MCF 10A (cell line): ENCODE measurements at regions of chr20 and their contacts with region 1.

Region 1: GRCh38 chr20:45771182-45771759 is 20.4 kb downstream of the WFDC3 start:
- DNase-seq: peak; percentile 83
- H3K4me3 Mint-ChIP-seq: no peak overlapping the region
- H3K27ac Mint-ChIP-seq: no peak overlapping the region
- H3K4me1 Mint-ChIP-seq: no peaks in the 10 kb centered on the region
- H3K27me3 Mint-ChIP-seq: peaks cover 11% of the 10 kb centered on the region
- CTCF ChIP-seq: peak; percentile 83

Region 2: GRCh38 chr20:45095753-45096371 is 675.4 kb before region 1 on chr20:
- CTCF ChIA-PET with region 1: interaction called, 13 read pairs
- POLR2A ChIA-PET with region 1: no interaction called
- intact Hi-C with region 1: no loop called
- DNase-seq: peak; percentile 76
- H3K4me3 Mint-ChIP-seq: no peak overlapping the region
- H3K27ac Mint-ChIP-seq: no peak overlapping the region
- H3K4me1 Mint-ChIP-seq: no peaks in the 10 kb centered on the region
- H3K27me3 Mint-ChIP-seq: no peaks in the 10 kb centered on the region
- CTCF ChIP-seq: peak; percentile 72

Region 3: DNA sequence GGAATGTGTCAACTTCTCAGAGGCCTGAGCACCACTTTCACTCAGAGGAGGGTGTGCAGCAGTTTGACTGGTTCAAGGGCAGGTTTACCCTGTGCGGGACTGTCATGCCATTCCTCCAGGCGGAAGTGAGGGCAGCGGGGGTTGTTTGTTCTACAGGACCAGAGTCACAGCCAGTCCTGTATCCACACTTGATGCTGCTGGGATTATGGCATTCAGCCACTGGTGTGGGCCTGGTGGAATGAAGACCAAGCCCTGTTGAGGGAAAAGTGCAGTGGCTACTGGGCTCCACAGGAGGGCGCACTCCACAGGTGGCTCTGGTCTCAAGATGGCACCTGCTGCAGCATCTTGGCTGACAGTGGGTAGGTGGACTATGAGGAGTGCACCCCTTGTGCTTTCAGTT is 535.3 kb before region 1 on chr20:
- CTCF ChIA-PET with region 1: no interaction called
- POLR2A ChIA-PET with region 1: no interaction called
- intact Hi-C with region 1: no loop called
- DNase-seq: peak; percentile 52
- H3K4me3 Mint-ChIP-seq: no peak overlapping the region
- H3K27ac Mint-ChIP-seq: no peak overlapping the region
- H3K4me1 Mint-ChIP-seq: no peaks in the 10 kb centered on the region
- H3K27me3 Mint-ChIP-seq: peaks cover 37% of the 10 kb centered on the region
- CTCF ChIP-seq: peak; percentile 33

Region 4: GRCh38 chr20:45373353-45374100 is 397.7 kb before region 1 on chr20:
- CTCF ChIA-PET with region 1: interaction called, 123 read pairs
- POLR2A ChIA-PET with region 1: interaction called, 9 read pairs
- intact Hi-C with region 1: loop called (anchors 1 kb)
- DNase-seq: peak; percentile 92
- H3K4me3 Mint-ChIP-seq: peak overlapping the region; percentile 40
- H3K27ac Mint-ChIP-seq: no peak overlapping the region
- H3K4me1 Mint-ChIP-seq: peaks cover 5% of the 10 kb centered on the region
- H3K27me3 Mint-ChIP-seq: no peaks in the 10 kb centered on the region
- CTCF ChIP-seq: peak; percentile 74

Region 5: DNA sequence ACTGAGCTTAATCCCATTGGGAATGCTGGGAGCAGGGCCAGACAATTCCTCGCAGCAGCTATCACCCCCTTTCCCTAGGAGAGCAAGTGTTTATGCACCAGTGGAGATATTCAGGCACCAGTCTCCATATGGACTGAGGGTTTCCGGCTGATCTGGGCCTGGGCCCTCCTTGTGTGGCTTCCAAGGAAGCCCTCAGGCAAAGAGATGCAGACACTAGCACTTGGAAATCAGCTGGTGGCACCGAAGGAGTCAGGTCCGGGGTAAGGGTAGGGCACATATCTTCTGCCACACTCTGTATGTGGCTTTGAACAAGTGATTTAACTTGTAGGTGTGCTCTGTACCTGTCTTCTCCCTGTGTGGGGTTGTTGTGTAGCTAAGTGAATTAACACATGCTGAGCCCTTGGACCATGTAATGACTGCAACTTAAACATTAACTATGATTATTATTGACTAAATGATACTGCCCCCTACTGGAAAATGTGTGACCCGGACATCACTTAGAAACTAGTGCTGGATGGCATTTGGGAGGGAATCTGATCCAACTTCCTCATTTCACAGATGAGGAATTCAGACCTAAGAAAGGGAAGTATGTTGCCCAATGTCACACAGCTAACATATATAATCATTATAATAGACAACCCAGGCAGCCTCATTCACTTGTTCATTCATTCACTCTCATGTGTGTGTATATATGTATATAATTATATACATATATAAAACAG is 321.0 kb before region 1 on chr20:
- CTCF ChIA-PET with region 1: interaction called, 18 read pairs
- POLR2A ChIA-PET with region 1: no interaction called
- intact Hi-C with region 1: no loop called
- DNase-seq: peak; percentile 55
- H3K4me3 Mint-ChIP-seq: no peak overlapping the region
- H3K27ac Mint-ChIP-seq: no peak overlapping the region
- H3K4me1 Mint-ChIP-seq: no peaks in the 10 kb centered on the region
- H3K27me3 Mint-ChIP-seq: peaks cover 1% of the 10 kb centered on the region
- CTCF ChIP-seq: peak; percentile 47

Region 6: DNA sequence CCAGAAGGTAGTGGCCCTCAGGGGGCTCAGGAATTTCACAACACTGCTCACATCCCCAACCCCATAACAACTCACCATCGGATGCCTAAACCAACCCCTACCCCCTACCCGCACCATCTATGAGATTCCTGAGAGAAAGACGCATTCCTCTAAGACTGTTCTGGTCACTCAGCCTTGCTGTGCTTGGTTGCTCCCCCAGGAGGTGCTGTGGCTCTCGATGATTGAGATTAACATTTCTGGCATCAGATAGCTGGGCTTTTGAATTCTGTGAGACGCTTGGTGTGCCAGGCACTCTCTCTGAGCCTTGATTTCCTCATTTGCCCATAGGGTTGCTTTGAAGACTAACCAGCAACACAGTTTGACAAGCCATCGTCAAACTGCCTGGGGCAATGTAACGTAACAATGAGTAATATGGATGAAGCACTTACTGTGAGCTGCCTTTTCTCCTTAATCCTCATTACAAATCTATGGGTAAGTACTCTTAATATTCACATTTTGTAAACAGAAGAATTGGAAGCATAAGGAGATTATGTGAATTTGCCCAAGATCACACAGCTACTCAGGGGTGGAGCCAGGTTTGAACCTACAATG is 233.0 kb before region 1 on chr20:
- CTCF ChIA-PET with region 1: interaction called, 24 read pairs
- POLR2A ChIA-PET with region 1: interaction called, 5 read pairs
- intact Hi-C with region 1: no loop called
- DNase-seq: peak; percentile 82
- H3K4me3 Mint-ChIP-seq: no peak overlapping the region
- H3K27ac Mint-ChIP-seq: no peak overlapping the region
- H3K4me1 Mint-ChIP-seq: peaks cover 15% of the 10 kb centered on the region
- H3K27me3 Mint-ChIP-seq: peaks cover 35% of the 10 kb centered on the region
- CTCF ChIP-seq: peak; percentile 11

Region 7: GRCh38 chr20:45629496-45630100 is 141.7 kb before region 1 on chr20 and contains the start of gene WFDC10A:
- CTCF ChIA-PET with region 1: interaction called, 38 read pairs
- POLR2A ChIA-PET with region 1: interaction called, 3 read pairs
- intact Hi-C with region 1: no loop called
- DNase-seq: peak; percentile 72
- H3K4me3 Mint-ChIP-seq: no peak within 1 kb of the TSS
- H3K27ac Mint-ChIP-seq: no peak within 1 kb of the TSS
- H3K4me1 Mint-ChIP-seq: no peaks in the 10 kb centered on the region
- H3K27me3 Mint-ChIP-seq: peaks cover 38% of the 10 kb centered on the region
- CTCF ChIP-seq: peak; percentile 53
- total RNA-seq, gene WFDC10A: not detected in 2 replicates

Region 8: DNA sequence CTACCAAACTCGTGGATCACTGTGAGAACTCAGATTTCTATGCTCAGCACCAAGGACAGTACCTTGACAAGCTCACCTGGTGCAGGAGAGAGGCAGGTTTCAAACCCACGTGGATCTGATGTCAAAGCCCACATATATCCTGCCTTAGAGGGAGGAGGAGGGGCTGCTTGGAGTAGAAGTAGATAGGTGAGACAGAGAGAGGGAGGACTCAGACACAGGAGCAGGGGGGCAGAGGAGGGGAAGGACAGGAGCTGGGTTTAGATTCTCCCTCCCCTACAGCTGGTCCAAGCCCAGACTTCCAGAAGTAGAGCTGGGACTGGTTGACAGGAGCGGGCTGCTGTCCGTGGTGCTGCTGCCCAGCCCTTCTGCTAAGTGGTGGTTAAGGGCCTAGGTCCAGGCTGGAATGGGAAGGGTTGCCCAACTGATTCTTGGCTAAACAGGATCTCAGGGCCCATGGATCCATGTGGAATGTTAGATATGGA is 459.6 kb after region 1 on chr20:
- CTCF ChIA-PET with region 1: no interaction called
- POLR2A ChIA-PET with region 1: no interaction called
- intact Hi-C with region 1: no loop called
- DNase-seq: peak; percentile 47
- H3K4me3 Mint-ChIP-seq: no peak overlapping the region
- H3K27ac Mint-ChIP-seq: no peak overlapping the region
- H3K4me1 Mint-ChIP-seq: peaks cover 7% of the 10 kb centered on the region
- H3K27me3 Mint-ChIP-seq: peaks cover 50% of the 10 kb centered on the region
- CTCF ChIP-seq: no peak